Activated CD4-positive, alpha-beta T cell treated with anti-CD3 and anti-CD28 coated beads for 36 hours (primary cell): ENCODE measurements at regions of chr19 and their contacts with region 1.

Region 1: DNA sequence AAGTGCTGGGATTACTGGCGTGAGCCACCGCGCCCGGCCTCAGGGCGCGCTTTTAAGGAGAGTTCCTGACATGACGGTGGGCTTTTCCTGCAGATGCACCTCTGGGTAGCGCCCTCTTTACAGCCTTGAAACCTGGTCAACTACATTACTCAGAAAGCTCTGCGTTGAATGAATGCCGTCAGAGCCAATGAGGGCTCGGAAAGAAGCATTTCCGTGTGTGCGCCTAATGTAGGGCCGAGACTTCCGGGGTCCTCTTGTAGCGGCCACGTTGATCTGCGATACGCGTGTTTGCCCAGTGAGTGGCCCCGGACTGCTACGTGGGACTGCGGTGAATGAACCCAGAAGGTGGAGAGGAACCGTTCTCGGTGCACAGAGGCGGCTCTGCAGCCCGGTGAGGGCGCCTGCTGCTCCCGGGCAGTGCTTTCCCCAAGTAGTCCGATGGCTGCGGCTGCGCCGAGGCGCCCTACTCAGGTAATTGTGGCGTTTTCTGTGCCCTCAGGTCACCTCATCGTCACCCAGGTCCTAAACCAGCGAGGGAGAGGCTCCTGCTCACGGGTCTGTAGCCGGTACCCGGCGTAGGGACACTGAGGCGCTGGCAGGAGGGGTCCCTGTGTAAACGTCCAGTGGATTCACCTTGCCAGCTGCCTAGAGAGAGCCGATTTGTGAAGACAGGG is 4.9 kb upstream of the ZNF552 start:
- DNase-seq: peak; percentile 89
- ATAC-seq: peak; percentile 90
- H3K4me3 Mint-ChIP-seq: peak overlapping the region; percentile 97
- H3K27ac Mint-ChIP-seq: peak overlapping the region; percentile 94
- H3K4me1 Mint-ChIP-seq: peaks cover 51% of the 10 kb centered on the region
- H3K27me3 Mint-ChIP-seq: no peaks in the 10 kb centered on the region

Region 2: GRCh38 chr19:57240311-57241090 is 579.1 kb before region 1 on chr19 and contains the start of gene ZNF805:
- CTCF ChIA-PET with region 1: no interaction called
- POLR2A ChIA-PET with region 1: no interaction called
- intact Hi-C with region 1: loop called in 1 of 2 experiments (anchors 1 kb)
- DNase-seq: peak; percentile 97
- ATAC-seq: peak; percentile 95
- H3K4me3 Mint-ChIP-seq: peak within 1 kb of the TSS; percentile 80
- H3K27ac Mint-ChIP-seq: peak within 1 kb of the TSS; percentile 92
- H3K4me1 Mint-ChIP-seq: peaks cover 23% of the 10 kb centered on the region
- H3K27me3 Mint-ChIP-seq: no peaks in the 10 kb centered on the region
- total RNA-seq, gene ZNF805: 6.4 to 7.1 TPM

Region 3: GRCh38 chr19:57682226-57682766 is 137.3 kb before region 1 on chr19:
- CTCF ChIA-PET with region 1: interaction called, 4 read pairs
- POLR2A ChIA-PET with region 1: no interaction called
- intact Hi-C with region 1: loop called in 1 of 2 experiments (anchors 2 kb)
- DNase-seq: no peak
- ATAC-seq: no peak
- H3K4me3 Mint-ChIP-seq: peak overlapping the region; percentile 85
- H3K27ac Mint-ChIP-seq: peak overlapping the region; percentile 93
- H3K4me1 Mint-ChIP-seq: peaks cover 31% of the 10 kb centered on the region
- H3K27me3 Mint-ChIP-seq: peaks cover under 1% of the 10 kb centered on the region

Region 4: DNA sequence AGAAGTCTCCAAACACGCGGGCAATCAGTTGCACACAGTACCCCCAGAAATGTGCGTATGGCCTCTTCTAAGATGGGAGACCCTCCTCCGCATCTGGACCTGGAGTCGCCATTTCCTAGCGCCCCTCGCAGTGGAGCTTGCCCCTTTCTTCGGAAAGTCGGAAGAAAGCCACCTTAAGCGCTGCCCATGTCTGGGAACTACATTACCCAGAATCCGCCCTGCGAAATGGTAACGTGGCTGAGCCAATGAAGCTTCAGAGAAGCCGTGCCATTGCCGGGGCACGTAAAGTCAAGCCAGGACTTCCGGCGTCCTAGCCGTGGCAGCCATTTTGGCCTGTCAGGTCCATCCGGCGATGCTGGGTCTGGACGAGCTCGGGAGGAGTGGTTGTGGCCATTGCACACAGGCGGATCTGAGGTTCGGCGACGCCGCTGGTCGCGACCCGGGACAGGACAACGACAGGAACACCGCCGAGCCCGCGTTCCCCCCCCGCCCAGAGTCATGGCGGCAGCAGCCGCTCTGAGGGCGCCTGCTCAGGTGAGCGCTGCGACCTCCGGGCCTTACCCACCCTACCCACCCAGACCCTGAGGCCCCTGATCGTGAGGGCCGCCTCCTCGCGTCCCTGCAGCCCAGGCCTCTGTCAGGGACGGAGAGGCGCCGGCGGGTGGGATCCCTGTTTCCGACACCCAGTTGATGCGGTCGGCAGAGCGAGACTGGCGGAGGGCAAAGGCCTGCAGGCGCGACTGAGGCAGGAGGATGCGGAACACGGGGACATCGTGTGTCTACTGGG is 50.1 kb before region 1 on chr19 and contains the start of gene ZNF586:
- CTCF ChIA-PET with region 1: no interaction called
- POLR2A ChIA-PET with region 1: interaction called, 6 read pairs
- intact Hi-C with region 1: loop called (anchors 1 kb)
- DNase-seq: peak; percentile 93
- ATAC-seq: peak; percentile 99
- H3K4me3 Mint-ChIP-seq: peak within 1 kb of the TSS; percentile 90
- H3K27ac Mint-ChIP-seq: peak within 1 kb of the TSS; percentile 93
- H3K4me1 Mint-ChIP-seq: peaks cover 25% of the 10 kb centered on the region
- H3K27me3 Mint-ChIP-seq: no peaks in the 10 kb centered on the region
- total RNA-seq, gene ZNF586: 20.3 to 20.5 TPM

Region 5: GRCh38 chr19:57850553-57851017 is 31.0 kb after region 1 on chr19:
- CTCF ChIA-PET with region 1: no interaction called
- POLR2A ChIA-PET with region 1: no interaction called
- intact Hi-C with region 1: loop called (anchors 1 kb)
- DNase-seq: peak; percentile 33
- ATAC-seq: no peak
- H3K4me3 Mint-ChIP-seq: peak overlapping the region; percentile 95
- H3K27ac Mint-ChIP-seq: peak overlapping the region; percentile 97
- H3K4me1 Mint-ChIP-seq: peaks cover 23% of the 10 kb centered on the region
- H3K27me3 Mint-ChIP-seq: no peaks in the 10 kb centered on the region